Activated naive CD8-positive, alpha-beta T cell treated with anti-CD3 and anti-CD28 coated beads, Interleukin-2, amount 10 ng/mL, durations not matched to agents 7 days and 5 days (primary cell): ENCODE measurements at regions of chr3 and their contacts with region 1.

Region 1: GRCh38 chr3:152268555-152269425 is at the start of gene MBNL1:
- DNase-seq: peak; percentile 86
- ATAC-seq: peak; percentile 73
- H3K4me3 Mint-ChIP-seq: peak within 1 kb of the TSS; percentile 99
- H3K27ac Mint-ChIP-seq: peak within 1 kb of the TSS; percentile 93
- H3K4me1 Mint-ChIP-seq: peaks cover 55% of the 10 kb centered on the region
- H3K27me3 Mint-ChIP-seq: no peaks in the 10 kb centered on the region
- total RNA-seq, gene MBNL1: 446 to 447 TPM

Region 2: GRCh38 chr3:152193673-152194267 is 75.0 kb before region 1 on chr3:
- POLR2A ChIA-PET with region 1: interaction called, 132 read pairs
- DNase-seq: no peak
- ATAC-seq: peak; percentile 64
- H3K4me3 Mint-ChIP-seq: peak overlapping the region; percentile 86
- H3K27ac Mint-ChIP-seq: peak overlapping the region; percentile 87
- H3K4me1 Mint-ChIP-seq: peaks cover 67% of the 10 kb centered on the region
- H3K27me3 Mint-ChIP-seq: no peaks in the 10 kb centered on the region

Region 3: GRCh38 chr3:152241142-152242017 is 27.4 kb before region 1 on chr3:
- POLR2A ChIA-PET with region 1: interaction called, 258 read pairs
- DNase-seq: no peak
- ATAC-seq: peak; percentile 12
- H3K4me3 Mint-ChIP-seq: peak overlapping the region; percentile 97
- H3K27ac Mint-ChIP-seq: peak overlapping the region; percentile 88
- H3K4me1 Mint-ChIP-seq: peaks cover 51% of the 10 kb centered on the region
- H3K27me3 Mint-ChIP-seq: no peaks in the 10 kb centered on the region

Region 4: GRCh38 chr3:152258448-152259393 is 10.1 kb before region 1 on chr3:
- POLR2A ChIA-PET with region 1: interaction called, 143 read pairs
- DNase-seq: no peak
- ATAC-seq: peak; percentile 50
- H3K4me3 Mint-ChIP-seq: peak overlapping the region; percentile 79
- H3K27ac Mint-ChIP-seq: peak overlapping the region; percentile 91
- H3K4me1 Mint-ChIP-seq: peaks cover 74% of the 10 kb centered on the region
- H3K27me3 Mint-ChIP-seq: no peaks in the 10 kb centered on the region

Region 5: GRCh38 chr3:152328841-152329240 is 60.1 kb after region 1 on chr3:
- POLR2A ChIA-PET with region 1: no interaction called
- DNase-seq: no peak
- ATAC-seq: no peak
- H3K4me3 Mint-ChIP-seq: no peak overlapping the region
- H3K27ac Mint-ChIP-seq: peak overlapping the region; percentile 75
- H3K4me1 Mint-ChIP-seq: peaks cover 54% of the 10 kb centered on the region
- H3K27me3 Mint-ChIP-seq: no peaks in the 10 kb centered on the region